GM12878 (cell line): ENCODE measurements at regions of chr22 and their contacts with region 1.

Region 1: GRCh38 chr22:43399338-43399979 is 12.4 kb upstream of the MPPED1 start:
- DNase-seq: no peak
- ATAC-seq: no peak
- H3K4me3 ChIP-seq: no peak overlapping the region
- H3K27ac ChIP-seq: no peak overlapping the region
- H3K4me1 ChIP-seq: no peaks in the 10 kb centered on the region
- H3K27me3 ChIP-seq: peaks cover 0 to 1% of the 10 kb centered on the region in 2 experiments; a peak in 2 of 4 replicates
- CTCF ChIP-seq: no peak
- EP300 ChIP-seq: no peak
- POLR2A ChIP-seq: no peak
- RAD21 ChIP-seq: no peak

Region 2: GRCh38 chr22:43826142-43827002 is 426.9 kb after region 1 on chr22:
- CTCF ChIA-PET with region 1: no interaction called
- POLR2A ChIA-PET with region 1: no interaction called
- RAD21 ChIA-PET with region 1: no interaction called
- SMC1A ChIA-PET with region 1: no interaction called
- in situ Hi-C with region 1: loop called (anchors 10 kb)
- intact Hi-C with region 1: no loop called
- DNase-seq: no peak
- ATAC-seq: peak; percentile 34; the same call in 1 of the 3 replicates
- H3K4me3 ChIP-seq: no peak overlapping the region
- H3K27ac ChIP-seq: no peak overlapping the region
- H3K4me1 ChIP-seq: no peaks in the 10 kb centered on the region
- H3K27me3 ChIP-seq: no peaks in the 10 kb centered on the region; a peak in 1 of 4 replicates
- CTCF ChIP-seq: peak; percentile 25 to 56 (median 37); a peak in 4 of 6 replicates
- EP300 ChIP-seq: no peak
- POLR2A ChIP-seq: no peak
- RAD21 ChIP-seq: peak; percentile 71

Region 3: DNA sequence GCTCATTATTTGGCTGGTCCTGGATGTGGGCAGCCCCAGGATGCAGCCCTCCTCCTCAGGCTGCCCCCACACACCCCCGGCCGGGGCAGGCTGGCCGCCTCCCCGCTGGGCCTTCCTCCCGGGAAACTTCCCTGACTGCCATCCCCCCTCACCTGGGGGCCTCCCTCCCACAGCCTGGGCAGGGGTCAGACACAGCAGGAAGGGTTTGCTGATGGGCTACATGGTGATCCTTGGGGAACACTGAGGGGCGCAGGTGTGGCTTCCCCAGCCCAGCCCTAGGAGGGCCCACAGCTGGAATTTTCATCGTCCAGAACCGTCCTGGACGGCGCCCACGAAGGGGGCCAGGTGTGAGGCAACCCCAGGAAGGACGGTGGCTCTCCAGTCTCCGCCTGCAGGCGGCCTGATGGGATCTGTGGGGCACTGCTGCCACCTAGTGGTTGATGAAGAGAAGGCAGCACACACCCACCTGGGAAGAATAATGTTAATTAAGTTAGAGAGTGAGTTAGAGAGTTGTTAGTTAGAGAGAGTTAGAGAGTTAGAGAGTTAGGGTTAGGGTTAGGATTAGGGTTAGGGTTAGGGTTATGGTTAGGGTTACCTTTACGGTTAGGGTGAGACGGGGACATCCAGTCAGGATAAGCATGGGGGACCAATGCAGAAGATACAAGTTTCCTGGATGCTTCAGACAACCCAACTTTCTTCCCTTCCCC is 1226.7 kb after region 1 on chr22:
- CTCF ChIA-PET with region 1: no interaction called
- POLR2A ChIA-PET with region 1: no interaction called
- RAD21 ChIA-PET with region 1: no interaction called
- SMC1A ChIA-PET with region 1: no interaction called
- in situ Hi-C with region 1: loop called (anchors 10 kb)
- intact Hi-C with region 1: no loop called
- DNase-seq: peak; percentile 15
- ATAC-seq: peak; percentile 94
- H3K4me3 ChIP-seq: no peak overlapping the region
- H3K27ac ChIP-seq: no peak overlapping the region
- H3K4me1 ChIP-seq: no peaks in the 10 kb centered on the region
- H3K27me3 ChIP-seq: no peaks in the 10 kb centered on the region
- CTCF ChIP-seq: peak; percentile 89 to 99 (median 92)
- EP300 ChIP-seq: no peak
- POLR2A ChIP-seq: no peak
- RAD21 ChIP-seq: peak; percentile 97